ENCODE measurements at regions of chr1 and their contacts with region 1.

Region 1: GRCh38 chr1:241627453-241628259 is 12.5 kb downstream of the CHML start:
- DNase-seq: peak in 10 of 14 experiments; percentile 8 to 82 (median 40)
- ATAC-seq: peak; percentile 89
- H3K4me3 ChIP-seq: peak overlapping the region; percentile 30
- H3K4me3 Mint-ChIP-seq: peak overlapping the region; percentile 88
- H3K27ac ChIP-seq: peak overlapping the region; percentile 13 to 59
- H3K27ac Mint-ChIP-seq: peak overlapping the region; percentile 94
- H3K4me1 ChIP-seq: peaks cover 2% of the 10 kb centered on the region
- H3K4me1 Mint-ChIP-seq: peaks cover 24% of the 10 kb centered on the region
- H3K27me3 ChIP-seq: no peaks in the 10 kb centered on the region
- H3K27me3 Mint-ChIP-seq: no peaks in the 10 kb centered on the region
- CTCF ChIP-seq: peak; percentile 88

Region 2: GRCh38 chr1:241677201-241677600 is 49.5 kb after region 1 on chr1:
- CTCF ChIA-PET with region 1: interaction called, 3 read pairs
- POLR2A ChIA-PET with region 1: interaction called, 3 read pairs
- intact Hi-C with region 1: loop called in 1 of 2 experiments (anchors 5 kb)
- DNase-seq: peak in 7 of 14 experiments; percentile 5 to 79 (median 32)
- ATAC-seq: peak; percentile 96
- H3K4me3 ChIP-seq: peak overlapping the region; percentile 41
- H3K4me3 Mint-ChIP-seq: peak overlapping the region; percentile 78
- H3K27ac ChIP-seq: peak overlapping the region; percentile 46 to 72
- H3K27ac Mint-ChIP-seq: peak overlapping the region; percentile 96
- H3K4me1 ChIP-seq: peaks cover 10% of the 10 kb centered on the region
- H3K4me1 Mint-ChIP-seq: peaks cover 23% of the 10 kb centered on the region
- H3K27me3 ChIP-seq: no peaks in the 10 kb centered on the region
- H3K27me3 Mint-ChIP-seq: no peaks in the 10 kb centered on the region
- CTCF ChIP-seq: no peak

Region 3: DNA sequence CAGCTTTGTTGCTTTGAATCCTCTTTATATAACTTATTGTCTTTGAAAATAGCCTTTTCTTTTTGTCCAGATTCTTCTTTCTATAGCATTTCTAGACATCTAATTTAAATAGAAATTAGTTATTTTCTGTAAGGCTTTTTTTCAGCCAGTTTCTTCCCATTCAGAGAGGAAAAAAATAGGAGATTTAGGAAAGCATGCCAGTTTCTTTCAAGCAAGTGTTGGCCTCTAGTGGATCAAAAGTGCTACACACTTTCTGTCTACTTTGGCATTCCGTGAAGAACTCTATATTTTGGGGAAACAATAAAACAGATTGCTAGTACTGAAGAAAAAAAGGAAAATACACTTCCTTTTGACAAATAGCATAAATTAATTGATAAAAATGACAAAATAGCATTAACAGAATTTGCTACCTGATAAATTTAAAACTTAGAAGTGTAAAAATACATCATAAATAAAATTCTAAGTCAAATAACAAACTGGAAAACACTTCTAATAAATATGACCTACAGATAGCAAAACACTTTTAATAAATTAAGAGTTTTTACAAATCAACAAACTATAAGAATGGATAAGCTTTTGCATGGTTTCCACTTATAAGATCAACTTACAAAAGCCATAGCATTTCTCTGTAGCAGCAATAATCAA is 207.2 kb after region 1 on chr1:
- CTCF ChIA-PET with region 1: no interaction called
- POLR2A ChIA-PET with region 1: no interaction called
- intact Hi-C with region 1: no loop called
- DNase-seq: no peak
- ATAC-seq: no peak
- H3K4me3 ChIP-seq: no peak overlapping the region
- H3K4me3 Mint-ChIP-seq: no peak overlapping the region
- H3K27ac ChIP-seq: no peak overlapping the region
- H3K27ac Mint-ChIP-seq: no peak overlapping the region
- H3K4me1 ChIP-seq: no peaks in the 10 kb centered on the region
- H3K4me1 Mint-ChIP-seq: no peaks in the 10 kb centered on the region
- H3K27me3 ChIP-seq: no peaks in the 10 kb centered on the region
- H3K27me3 Mint-ChIP-seq: peaks cover 28% of the 10 kb centered on the region
- CTCF ChIP-seq: no peak

Region 4: GRCh38 chr1:242770366-242770765 is 1142.7 kb after region 1 on chr1:
- CTCF ChIA-PET with region 1: no interaction called
- POLR2A ChIA-PET with region 1: no interaction called
- intact Hi-C with region 1: no loop called
- DNase-seq: no peak
- ATAC-seq: no peak
- H3K4me3 ChIP-seq: no peak overlapping the region
- H3K4me3 Mint-ChIP-seq: no peak overlapping the region
- H3K27ac ChIP-seq: no peak overlapping the region
- H3K27ac Mint-ChIP-seq: no peak overlapping the region
- H3K4me1 ChIP-seq: no peaks in the 10 kb centered on the region
- H3K4me1 Mint-ChIP-seq: no peaks in the 10 kb centered on the region
- H3K27me3 ChIP-seq: no peaks in the 10 kb centered on the region
- H3K27me3 Mint-ChIP-seq: no peaks in the 10 kb centered on the region
- CTCF ChIP-seq: no peak

Measured in CD4-positive, alpha-beta T cell (primary cell).